Colonic mucosa (tissue), 4 donors: ENCODE measurements at regions of chr20 and their contacts with region 1.

Region 1: DNA sequence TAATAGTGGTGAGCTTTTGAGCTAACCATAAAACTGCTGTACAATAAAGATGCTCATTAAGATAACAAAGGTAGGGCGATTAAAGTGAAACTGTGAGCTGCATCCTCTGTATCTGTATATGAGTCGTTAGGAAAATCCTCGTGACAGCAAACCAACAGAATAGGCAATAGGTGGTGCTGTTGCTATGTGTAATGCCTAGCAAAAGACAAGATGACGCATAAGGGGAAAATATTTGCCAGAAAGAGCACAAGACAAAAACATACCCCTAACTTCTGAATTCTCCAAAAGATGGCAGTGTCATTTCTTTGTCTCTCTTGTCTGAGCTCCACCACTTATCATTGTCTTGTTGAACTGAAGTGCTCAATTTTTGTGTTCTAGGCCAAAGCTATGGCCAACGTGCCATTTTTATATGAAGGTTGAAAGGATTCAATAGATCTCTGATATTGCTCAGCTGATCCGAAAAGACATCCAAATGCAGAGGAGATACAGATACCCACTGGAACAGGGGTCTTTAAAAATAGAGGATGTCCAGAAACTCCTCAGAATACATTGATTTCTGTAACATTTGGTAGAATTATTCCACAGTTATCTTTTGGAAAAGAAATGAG is 56.3 kb upstream of the ANKEF1 start:
- DNase-seq: peak; percentile 43
- H3K4me3 ChIP-seq: no peak overlapping the region
- H3K27ac ChIP-seq: no peak overlapping the region
- H3K4me1 ChIP-seq: no peaks in the 10 kb centered on the region
- H3K27me3 ChIP-seq: no peaks in the 10 kb centered on the region
- CTCF ChIP-seq: peak; percentile 57

Region 2: GRCh38 chr20:10090588-10091166 is 112.2 kb after region 1 on chr20:
- intact Hi-C with region 1: loop called (anchors 2 kb)
- DNase-seq: peak; percentile 36
- H3K4me3 ChIP-seq: no peak overlapping the region
- H3K27ac ChIP-seq: no peak overlapping the region
- H3K4me1 ChIP-seq: no peaks in the 10 kb centered on the region
- H3K27me3 ChIP-seq: no peaks in the 10 kb centered on the region
- CTCF ChIP-seq: peak; percentile 71

Region 3: DNA sequence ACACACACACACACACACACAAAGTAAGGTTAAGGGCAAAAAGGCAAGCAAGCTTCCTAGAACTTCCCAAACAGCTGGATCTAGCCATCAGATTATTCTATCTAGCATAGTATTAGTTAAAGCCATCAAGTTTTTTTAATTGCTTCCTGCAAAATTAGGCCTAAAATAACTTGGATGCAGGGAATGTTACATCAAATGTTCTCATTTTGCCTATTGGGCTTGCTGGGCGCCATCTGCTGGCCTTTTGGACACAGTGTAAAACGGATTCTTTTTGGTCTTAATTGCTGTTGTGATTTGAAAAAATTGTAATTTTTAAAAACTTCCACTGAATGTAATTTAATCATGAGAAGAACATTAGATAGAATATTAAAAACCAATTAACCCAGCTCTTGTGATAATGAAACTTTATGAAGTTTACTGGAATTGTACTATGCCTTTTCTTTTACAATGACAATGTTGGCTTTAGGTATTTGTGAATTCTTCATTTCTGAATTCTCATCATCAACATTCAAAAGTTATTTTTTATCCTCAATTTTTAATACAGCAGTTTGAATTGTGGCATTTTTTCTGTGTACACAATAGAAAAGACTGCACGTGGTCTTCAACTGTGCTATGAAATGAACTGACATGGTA is 448.7 kb after region 1 on chr20:
- intact Hi-C with region 1: loop called (anchors 2 kb)
- DNase-seq: peak; percentile 50
- H3K4me3 ChIP-seq: no peak overlapping the region
- H3K27ac ChIP-seq: no peak overlapping the region
- H3K4me1 ChIP-seq: peaks cover 3% of the 10 kb centered on the region
- H3K27me3 ChIP-seq: no peaks in the 10 kb centered on the region
- CTCF ChIP-seq: peak; percentile 77